ENCODE measurements at regions of chr9 and their contacts with region 1.

Region 1: GRCh38 chr9:128117613-128118471 is 9.7 kb downstream of the PTGES2 start:
- DNase-seq: peak; percentile 87
- H3K4me3 Mint-ChIP-seq: no peak overlapping the region
- H3K27ac Mint-ChIP-seq: no peak overlapping the region
- H3K4me1 Mint-ChIP-seq: no peaks in the 10 kb centered on the region
- H3K27me3 Mint-ChIP-seq: no peaks in the 10 kb centered on the region
- CTCF ChIP-seq: peak; percentile 100

Region 2: GRCh38 chr9:128051932-128052709 is 65.7 kb before region 1 on chr9:
- CTCF ChIA-PET with region 1: interaction called, 13 read pairs
- POLR2A ChIA-PET with region 1: no interaction called
- intact Hi-C with region 1: no loop called
- DNase-seq: peak; percentile 54
- H3K4me3 Mint-ChIP-seq: no peak overlapping the region
- H3K27ac Mint-ChIP-seq: no peak overlapping the region
- H3K4me1 Mint-ChIP-seq: peaks cover 9% of the 10 kb centered on the region
- H3K27me3 Mint-ChIP-seq: no peaks in the 10 kb centered on the region
- CTCF ChIP-seq: no peak

Region 3: DNA sequence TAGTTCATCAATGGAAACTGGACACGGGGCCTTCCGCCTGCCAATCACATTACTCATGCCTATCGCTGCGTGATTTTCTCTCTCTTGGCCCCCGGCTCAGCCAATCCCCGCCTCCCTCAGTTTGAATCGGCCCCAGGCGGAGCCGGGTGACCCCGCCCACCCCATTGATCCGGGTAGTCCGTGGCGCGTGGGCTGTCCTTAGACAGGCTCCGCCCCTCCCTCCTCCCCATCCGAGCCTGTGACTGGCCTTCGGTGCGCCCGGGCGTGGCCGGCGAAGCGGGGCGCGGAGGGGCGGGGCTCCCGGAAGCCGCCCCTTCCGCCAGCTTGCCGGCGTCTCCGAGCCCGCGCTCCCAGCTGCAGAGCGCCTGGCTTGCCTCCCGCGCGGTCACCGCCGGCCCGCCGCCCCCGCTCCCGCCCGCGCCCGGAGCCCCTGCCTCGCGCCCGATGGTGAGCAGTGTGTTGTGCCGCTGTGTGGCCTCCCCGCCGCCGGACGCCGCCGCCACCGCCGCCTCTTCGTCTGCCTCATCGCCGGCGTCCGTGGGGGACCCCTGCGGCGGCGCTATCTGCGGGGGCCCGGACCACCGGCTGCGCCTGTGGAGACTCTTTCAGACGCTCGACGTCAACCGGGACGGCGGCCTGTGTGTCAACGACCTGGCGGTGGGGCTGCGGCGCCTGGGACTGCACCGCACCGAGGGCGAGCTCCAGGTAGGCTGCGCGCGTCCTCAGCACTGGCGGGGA is 49.8 kb before region 1 on chr9 and contains the start of gene SLC25A25:
- CTCF ChIA-PET with region 1: interaction called, 13 read pairs
- POLR2A ChIA-PET with region 1: no interaction called
- intact Hi-C with region 1: no loop called
- DNase-seq: peak; percentile 99
- H3K4me3 Mint-ChIP-seq: no peak within 1 kb of the TSS
- H3K27ac Mint-ChIP-seq: peak within 1 kb of the TSS; percentile 77
- H3K4me1 Mint-ChIP-seq: peaks cover 30% of the 10 kb centered on the region
- H3K27me3 Mint-ChIP-seq: no peaks in the 10 kb centered on the region
- CTCF ChIP-seq: no peak
- total RNA-seq, gene SLC25A25: 11.1 and 15.5 TPM in 2 replicates

Region 4: DNA sequence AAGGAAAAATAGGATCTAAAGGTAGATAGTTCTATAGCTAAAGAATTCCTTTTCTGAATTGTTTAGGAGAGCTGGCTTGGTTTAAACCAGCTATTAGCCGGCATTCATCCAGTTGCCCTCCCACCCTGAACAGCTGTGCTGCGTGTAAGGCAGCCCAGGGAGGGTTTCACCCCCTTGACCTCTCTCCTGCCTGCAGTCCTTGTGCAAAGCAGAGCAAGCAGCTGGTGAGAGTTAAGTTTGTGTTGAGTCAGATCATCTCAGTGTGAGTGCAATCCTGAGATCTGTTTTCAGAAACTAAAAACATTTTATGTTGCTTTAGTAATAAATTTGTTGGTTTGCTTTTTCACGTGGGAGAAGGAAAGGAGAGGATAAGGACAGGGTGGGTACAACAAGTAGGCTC is 36.8 kb before region 1 on chr9:
- CTCF ChIA-PET with region 1: interaction called, 32 read pairs
- POLR2A ChIA-PET with region 1: no interaction called
- intact Hi-C with region 1: no loop called
- DNase-seq: no peak
- H3K4me3 Mint-ChIP-seq: no peak overlapping the region
- H3K27ac Mint-ChIP-seq: no peak overlapping the region
- H3K4me1 Mint-ChIP-seq: peaks cover 26% of the 10 kb centered on the region
- H3K27me3 Mint-ChIP-seq: no peaks in the 10 kb centered on the region
- CTCF ChIP-seq: no peak

Region 5: GRCh38 chr9:128094166-128094967 is 23.5 kb before region 1 on chr9:
- CTCF ChIA-PET with region 1: interaction called, 18 read pairs
- POLR2A ChIA-PET with region 1: interaction called, 9 read pairs
- intact Hi-C with region 1: no loop called
- DNase-seq: peak; percentile 99
- H3K4me3 Mint-ChIP-seq: peak overlapping the region; percentile 66
- H3K27ac Mint-ChIP-seq: peak overlapping the region; percentile 99
- H3K4me1 Mint-ChIP-seq: peaks cover 21% of the 10 kb centered on the region
- H3K27me3 Mint-ChIP-seq: no peaks in the 10 kb centered on the region
- CTCF ChIP-seq: no peak

Region 6: DNA sequence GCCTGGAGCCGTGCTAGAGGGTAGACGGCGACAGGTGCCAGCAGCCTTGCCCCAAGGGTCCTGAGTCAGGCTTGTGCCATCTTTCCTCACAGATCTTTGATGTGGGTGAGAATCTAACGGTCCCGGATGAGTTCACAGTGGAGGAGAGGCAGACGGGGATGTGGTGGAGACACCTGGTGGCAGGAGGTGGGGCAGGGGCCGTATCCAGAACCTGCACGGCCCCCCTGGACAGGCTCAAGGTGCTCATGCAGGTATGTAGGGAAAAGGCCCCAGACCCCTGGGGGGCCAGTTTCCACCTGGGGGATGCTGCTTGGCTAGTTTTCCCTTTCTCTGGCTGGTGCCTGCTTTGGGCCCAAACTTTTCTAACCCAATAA is 14.3 kb before region 1 on chr9:
- CTCF ChIA-PET with region 1: interaction called, 62 read pairs
- POLR2A ChIA-PET with region 1: interaction called, 9 read pairs
- intact Hi-C with region 1: no loop called
- DNase-seq: no peak
- H3K4me3 Mint-ChIP-seq: no peak overlapping the region
- H3K27ac Mint-ChIP-seq: peak overlapping the region; percentile 61
- H3K4me1 Mint-ChIP-seq: peaks cover 6% of the 10 kb centered on the region
- H3K27me3 Mint-ChIP-seq: no peaks in the 10 kb centered on the region
- CTCF ChIP-seq: peak; percentile 7

Region 7: DNA sequence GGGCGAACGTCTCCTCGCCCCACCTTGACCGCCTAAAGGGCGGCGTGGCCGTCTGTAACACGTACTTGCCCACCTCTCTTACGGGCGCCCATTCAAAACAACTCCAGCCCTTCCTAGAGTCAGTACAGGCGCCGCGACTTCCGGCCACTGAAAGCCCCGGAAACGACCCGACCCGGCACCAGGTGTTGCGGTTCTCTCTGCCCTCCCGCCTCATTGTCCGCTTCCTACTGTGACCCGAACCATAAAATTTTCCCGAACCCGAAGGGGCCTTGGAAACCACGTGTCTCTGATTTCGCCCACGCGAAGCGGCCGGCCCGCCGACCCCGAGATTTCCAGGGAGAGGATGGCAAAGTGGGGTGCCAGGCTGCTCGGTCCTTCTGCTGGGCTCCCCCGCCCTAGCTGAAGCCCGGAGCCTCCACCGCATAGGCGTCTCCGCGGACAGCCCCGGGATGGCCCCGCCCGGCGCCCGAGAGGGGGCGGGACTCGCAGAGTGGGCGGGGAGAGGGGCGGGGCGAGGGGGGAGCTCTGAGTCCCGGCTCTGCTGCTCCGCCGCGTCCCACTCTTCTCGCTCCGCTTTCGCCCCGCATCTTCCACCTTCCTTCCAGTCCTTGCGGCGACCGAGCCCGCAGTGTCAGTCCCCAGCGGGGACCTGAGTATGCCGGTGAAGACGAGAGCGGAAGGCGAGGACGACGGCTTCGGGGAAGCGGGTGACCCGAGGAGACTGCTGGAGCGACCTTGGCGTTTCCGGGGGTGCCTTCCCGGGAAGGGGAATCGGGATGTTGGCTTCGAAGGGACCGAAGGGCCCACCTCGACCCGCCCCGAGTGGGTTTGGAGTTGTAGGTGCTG is 10.4 kb after region 1 on chr9:
- CTCF ChIA-PET with region 1: interaction called, 18 read pairs
- POLR2A ChIA-PET with region 1: interaction called, 5 read pairs
- intact Hi-C with region 1: no loop called
- DNase-seq: peak; percentile 92
- H3K4me3 Mint-ChIP-seq: peak overlapping the region; percentile 84
- H3K27ac Mint-ChIP-seq: peak overlapping the region; percentile 97
- H3K4me1 Mint-ChIP-seq: peaks cover 23% of the 10 kb centered on the region
- H3K27me3 Mint-ChIP-seq: peaks cover 9% of the 10 kb centered on the region
- CTCF ChIP-seq: no peak

Region 8: DNA sequence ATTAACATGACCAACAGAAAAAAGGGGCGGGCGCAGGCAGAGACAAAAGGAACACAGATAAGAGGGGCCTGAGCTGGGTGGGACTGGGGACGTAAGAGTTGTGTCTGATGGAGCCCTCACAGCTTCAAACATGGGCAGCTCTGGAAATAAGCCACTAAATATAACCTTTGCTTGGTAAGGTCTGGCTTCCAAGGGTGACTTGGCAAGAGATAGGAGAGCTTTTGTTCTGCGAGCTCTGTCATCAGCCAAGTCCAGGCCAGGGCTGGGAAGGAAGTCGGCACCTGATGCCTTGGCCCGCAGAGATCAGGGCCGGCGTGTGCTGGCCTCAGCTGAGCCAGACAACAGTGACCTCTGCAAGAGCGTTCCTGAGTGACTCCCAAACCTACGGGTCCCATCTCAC is 192.6 kb after region 1 on chr9:
- CTCF ChIA-PET with region 1: no interaction called
- POLR2A ChIA-PET with region 1: no interaction called
- intact Hi-C with region 1: no loop called
- DNase-seq: no peak
- H3K4me3 Mint-ChIP-seq: no peak overlapping the region
- H3K27ac Mint-ChIP-seq: no peak overlapping the region
- H3K4me1 Mint-ChIP-seq: no peaks in the 10 kb centered on the region
- H3K27me3 Mint-ChIP-seq: no peaks in the 10 kb centered on the region
- CTCF ChIP-seq: no peak

Measured in MCF 10A (cell line).